ENCODE measurements at regions of chr1 and their contacts with region 1.

Region 1: DNA sequence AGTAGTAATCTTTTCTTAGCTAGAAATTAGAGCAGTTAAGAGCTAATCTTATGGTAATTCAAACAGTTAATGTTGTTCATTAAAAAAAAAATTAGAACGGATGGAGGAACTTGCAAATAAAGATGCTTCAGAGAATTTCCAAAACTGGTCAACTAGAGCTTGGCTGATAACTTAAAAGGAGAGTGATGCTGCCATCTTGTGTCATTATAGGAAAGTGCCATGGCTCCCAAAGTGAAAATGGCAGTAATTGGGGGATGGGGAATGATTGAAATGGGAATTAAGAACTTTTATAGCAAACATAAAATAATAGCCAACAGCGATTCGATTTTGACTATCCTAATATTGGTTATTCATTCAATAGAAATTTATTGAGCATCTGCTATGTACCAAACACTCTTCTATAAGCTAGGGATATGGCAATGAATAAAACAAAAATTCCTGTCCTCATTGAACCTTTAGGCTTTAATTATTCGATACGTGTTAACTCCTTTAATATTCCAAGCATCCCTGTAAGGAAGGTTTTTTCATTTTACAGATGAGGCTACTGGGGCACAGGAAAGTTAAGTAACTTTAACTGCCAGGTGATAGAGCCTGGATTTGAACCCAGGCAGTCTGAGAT is 5.7 kb upstream of the PLPP3 start:
- DNase-seq: peak; percentile 25
- H3K4me3 ChIP-seq: no peak overlapping the region
- H3K27ac ChIP-seq: no peak overlapping the region
- H3K4me1 ChIP-seq: no peaks in the 10 kb centered on the region
- H3K27me3 ChIP-seq: no peaks in the 10 kb centered on the region
- CTCF ChIP-seq: peak; percentile 77 to 82

Region 2: GRCh38 chr1:55140546-55140983 is 1444.5 kb before region 1 on chr1:
- CTCF ChIA-PET with region 1: no interaction called
- dilution Hi-C with region 1: no loop called
- in situ Hi-C with region 1: no loop called
- intact Hi-C with region 1: loop called (anchors 10 kb)
- DNase-seq: peak; percentile 72
- H3K4me3 ChIP-seq: no peak overlapping the region
- H3K27ac ChIP-seq: no peak overlapping the region
- H3K4me1 ChIP-seq: no peaks in the 10 kb centered on the region
- H3K27me3 ChIP-seq: no peaks in the 10 kb centered on the region
- CTCF ChIP-seq: peak; percentile 77 to 89

Region 3: DNA sequence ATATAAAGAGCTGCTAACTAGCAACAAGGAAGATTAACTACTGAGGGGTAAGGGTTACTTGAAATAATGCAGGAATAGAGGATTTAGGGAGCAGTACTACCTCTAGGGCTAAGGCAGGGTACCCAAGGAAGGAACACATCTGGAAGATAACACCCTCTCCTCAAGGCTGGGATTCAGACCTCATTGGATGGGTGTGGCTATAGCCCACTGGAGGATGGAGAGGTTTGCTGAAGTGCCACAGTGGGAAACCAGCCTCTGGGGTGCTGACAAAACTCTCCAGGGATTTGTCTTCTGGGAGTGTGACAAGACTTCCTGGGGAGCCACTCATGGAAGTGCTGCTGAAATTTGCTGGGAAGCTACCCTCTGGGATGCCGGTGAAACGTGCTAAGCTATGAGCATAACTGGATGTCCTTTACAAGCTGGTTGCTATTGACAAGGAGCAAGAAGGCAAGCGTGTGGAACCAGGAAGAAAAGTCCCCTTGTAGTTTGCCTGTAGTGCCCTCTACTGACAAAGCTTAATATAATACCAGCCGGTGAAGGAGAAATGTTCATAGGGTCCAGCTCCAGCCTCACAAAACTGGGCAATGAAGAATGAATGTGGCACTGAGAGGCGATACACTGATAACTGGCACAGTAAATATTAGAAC is 1247.1 kb before region 1 on chr1:
- CTCF ChIA-PET with region 1: no interaction called
- dilution Hi-C with region 1: no loop called
- in situ Hi-C with region 1: no loop called
- intact Hi-C with region 1: loop called (anchors 1 kb)
- DNase-seq: peak; percentile 54
- H3K4me3 ChIP-seq: no peak overlapping the region
- H3K27ac ChIP-seq: no peak overlapping the region
- H3K4me1 ChIP-seq: no peaks in the 10 kb centered on the region
- H3K27me3 ChIP-seq: no peaks in the 10 kb centered on the region
- CTCF ChIP-seq: peak; percentile 58 to 73

Region 4: DNA sequence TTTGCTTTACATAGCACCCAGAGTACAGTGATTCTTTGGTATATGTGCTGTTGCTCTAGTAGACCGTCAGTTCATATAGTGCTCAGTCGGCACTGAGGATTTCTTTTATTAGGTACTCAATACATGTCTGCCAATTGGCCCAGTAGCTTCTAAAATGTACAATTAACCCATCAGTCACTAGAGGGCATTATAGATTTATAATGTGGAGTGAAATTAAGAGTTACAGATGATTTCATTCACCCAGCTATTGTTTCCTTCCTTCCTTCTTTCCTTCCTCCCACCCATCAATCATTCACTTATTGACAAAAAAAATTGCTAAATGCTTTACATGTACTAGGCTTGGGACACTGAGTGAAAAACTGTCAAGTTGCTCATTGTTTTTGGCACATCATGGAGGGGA is 1106.3 kb before region 1 on chr1:
- CTCF ChIA-PET with region 1: no interaction called
- dilution Hi-C with region 1: no loop called
- in situ Hi-C with region 1: loop called in 1 of 2 experiments (anchors 25 kb)
- intact Hi-C with region 1: loop called (anchors 1 kb)
- DNase-seq: peak; percentile 21
- H3K4me3 ChIP-seq: no peak overlapping the region
- H3K27ac ChIP-seq: no peak overlapping the region
- H3K4me1 ChIP-seq: peaks cover 3% of the 10 kb centered on the region
- H3K27me3 ChIP-seq: no peaks in the 10 kb centered on the region
- CTCF ChIP-seq: peak; percentile 43

Region 5: GRCh38 chr1:56409094-56409691 is 175.8 kb before region 1 on chr1:
- CTCF ChIA-PET with region 1: no interaction called
- dilution Hi-C with region 1: no loop called
- in situ Hi-C with region 1: loop called (anchors 10 to 25 kb)
- intact Hi-C with region 1: no loop called
- DNase-seq: peak; percentile 27
- H3K4me3 ChIP-seq: no peak overlapping the region
- H3K27ac ChIP-seq: no peak overlapping the region
- H3K4me1 ChIP-seq: no peaks in the 10 kb centered on the region
- H3K27me3 ChIP-seq: no peaks in the 10 kb centered on the region
- CTCF ChIP-seq: peak; percentile 62 to 83

Region 6: GRCh38 chr1:56821140-56821797 is 236.2 kb after region 1 on chr1:
- CTCF ChIA-PET with region 1: interaction called, 3 read pairs
- dilution Hi-C with region 1: no loop called
- in situ Hi-C with region 1: no loop called
- intact Hi-C with region 1: loop called (anchors 2 kb)
- DNase-seq: peak; percentile 48
- H3K4me3 ChIP-seq: no peak overlapping the region
- H3K27ac ChIP-seq: no peak overlapping the region
- H3K4me1 ChIP-seq: peaks cover 26% of the 10 kb centered on the region
- H3K27me3 ChIP-seq: no peaks in the 10 kb centered on the region
- CTCF ChIP-seq: peak; percentile 99

Measured in mammary epithelial cell (primary cell).